Heart right ventricle (tissue), 16 donors: ENCODE measurements at regions of chr20 and their contacts with region 1.

Region 1: DNA sequence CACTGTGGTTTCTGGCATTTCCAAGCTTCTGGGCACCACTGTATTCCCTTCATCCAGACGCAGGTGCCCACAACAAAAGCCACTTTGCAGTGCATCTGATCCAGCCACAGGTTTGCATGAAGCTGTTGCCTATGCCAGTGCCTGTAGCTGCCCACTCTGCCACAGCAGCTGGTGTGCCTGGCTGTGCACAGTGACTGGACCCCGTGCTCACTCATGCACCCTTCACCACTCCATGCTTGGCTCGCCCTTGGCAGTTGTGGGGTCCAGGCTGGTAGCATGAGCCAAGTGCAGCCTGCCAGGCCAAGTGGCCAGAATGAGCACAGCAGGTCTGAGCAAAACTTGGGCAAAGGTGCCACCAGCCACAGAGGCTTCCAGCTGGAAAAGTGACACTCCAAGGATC is 42.7 kb downstream of the SEL1L2 start:
- DNase-seq: no peak
- ATAC-seq: no peak
- H3K4me3 ChIP-seq: no peak overlapping the region
- H3K27ac ChIP-seq: no peak overlapping the region
- H3K4me1 ChIP-seq: no peaks in the 10 kb centered on the region
- H3K27me3 ChIP-seq: no peaks in the 10 kb centered on the region
- CTCF ChIP-seq: no peak

Region 2: GRCh38 chr20:13839421-13840092 is 108.2 kb before region 1 on chr20:
- intact Hi-C with region 1: loop called in 1 of 10 experiments (anchors 10 kb)
- DNase-seq: no peak
- ATAC-seq: no peak
- H3K4me3 ChIP-seq: no peak overlapping the region
- H3K27ac ChIP-seq: no peak overlapping the region
- H3K4me1 ChIP-seq: no peaks in the 10 kb centered on the region
- H3K27me3 ChIP-seq: peaks cover 0 to 9% (median 0%) of the 10 kb centered on the region in 7 donors
- CTCF ChIP-seq: no peak

Region 3: GRCh38 chr20:14030991-14031390 is 83.3 kb after region 1 on chr20:
- intact Hi-C with region 1: no loop called
- DNase-seq: no peak
- ATAC-seq: no peak
- H3K4me3 ChIP-seq: no peak overlapping the region
- H3K27ac ChIP-seq: no peak overlapping the region
- H3K4me1 ChIP-seq: no peaks in the 10 kb centered on the region
- H3K27me3 ChIP-seq: no peaks in the 10 kb centered on the region
- CTCF ChIP-seq: no peak

Region 4: GRCh38 chr20:14189794-14190402 is 242.2 kb after region 1 on chr20:
- intact Hi-C with region 1: no loop called
- DNase-seq: no peak
- ATAC-seq: no peak
- H3K4me3 ChIP-seq: no peak overlapping the region
- H3K27ac ChIP-seq: no peak overlapping the region
- H3K4me1 ChIP-seq: no peaks in the 10 kb centered on the region
- H3K27me3 ChIP-seq: no peaks in the 10 kb centered on the region
- CTCF ChIP-seq: peak in 6 of 9 donors; percentile 11 to 35 (median 21)